CD4-positive, alpha-beta memory T cell (primary cell): ENCODE measurements at regions of chr1 and their contacts with region 1.

Region 1: GRCh38 chr1:41891199-41891896 is 27.4 kb downstream of the HIVEP3 start:
- DNase-seq: peak; percentile 75 to 80 (median 77)
- H3K4me3 ChIP-seq: peak overlapping the region; percentile 48 to 73
- H3K4me3 Mint-ChIP-seq: peak overlapping the region; percentile 81 to 95 (median 87)
- H3K27ac ChIP-seq: peak overlapping the region; percentile 74
- H3K27ac Mint-ChIP-seq: peak overlapping the region; percentile 87 to 97 (median 95)
- H3K4me1 ChIP-seq: peaks cover 52% of the 10 kb centered on the region
- H3K4me1 Mint-ChIP-seq: peaks cover 37 to 66% (median 50%) of the 10 kb centered on the region in 4 donors
- H3K27me3 ChIP-seq: no peaks in the 10 kb centered on the region
- H3K27me3 Mint-ChIP-seq: peaks cover 0 to 2% of the 10 kb centered on the region in 2 donors

Region 2: GRCh38 chr1:41662061-41662764 is 229.1 kb before region 1 on chr1:
- CTCF ChIA-PET with region 1: interaction called, 3 read pairs
- POLR2A ChIA-PET with region 1: interaction called, 3 read pairs
- intact Hi-C with region 1: loop called (anchors 10 kb)
- DNase-seq: peak; percentile 68 to 81 (median 76)
- H3K4me3 ChIP-seq: peak overlapping the region in 1 of 2 donors; percentile 64
- H3K4me3 Mint-ChIP-seq: peak overlapping the region in 3 of 8 donors; percentile 68 to 93 (median 79)
- H3K27ac ChIP-seq: peak overlapping the region; percentile 67
- H3K27ac Mint-ChIP-seq: peak overlapping the region in 6 of 7 donors; percentile 48 to 84 (median 55)
- H3K4me1 ChIP-seq: peaks cover 82% of the 10 kb centered on the region
- H3K4me1 Mint-ChIP-seq: peaks cover 58 to 89% (median 75%) of the 10 kb centered on the region in 4 donors
- H3K27me3 ChIP-seq: no peaks in the 10 kb centered on the region
- H3K27me3 Mint-ChIP-seq: no peaks in the 10 kb centered on the region

Region 3: GRCh38 chr1:41751804-41752513 is 139.4 kb before region 1 on chr1:
- CTCF ChIA-PET with region 1: no interaction called
- POLR2A ChIA-PET with region 1: interaction called, 4 read pairs
- intact Hi-C with region 1: loop called (anchors 5 kb)
- DNase-seq: no peak
- H3K4me3 ChIP-seq: no peak overlapping the region
- H3K4me3 Mint-ChIP-seq: peak overlapping the region in 4 of 8 donors; percentile 73 to 77 (median 75)
- H3K27ac ChIP-seq: no peak overlapping the region
- H3K27ac Mint-ChIP-seq: peak overlapping the region in 5 of 7 donors; percentile 72 to 92 (median 84)
- H3K4me1 ChIP-seq: peaks cover 44% of the 10 kb centered on the region
- H3K4me1 Mint-ChIP-seq: peaks cover 27 to 54% (median 40%) of the 10 kb centered on the region in 4 donors
- H3K27me3 ChIP-seq: no peaks in the 10 kb centered on the region
- H3K27me3 Mint-ChIP-seq: peaks cover 0 to 1% of the 10 kb centered on the region in 2 donors

Region 4: DNA sequence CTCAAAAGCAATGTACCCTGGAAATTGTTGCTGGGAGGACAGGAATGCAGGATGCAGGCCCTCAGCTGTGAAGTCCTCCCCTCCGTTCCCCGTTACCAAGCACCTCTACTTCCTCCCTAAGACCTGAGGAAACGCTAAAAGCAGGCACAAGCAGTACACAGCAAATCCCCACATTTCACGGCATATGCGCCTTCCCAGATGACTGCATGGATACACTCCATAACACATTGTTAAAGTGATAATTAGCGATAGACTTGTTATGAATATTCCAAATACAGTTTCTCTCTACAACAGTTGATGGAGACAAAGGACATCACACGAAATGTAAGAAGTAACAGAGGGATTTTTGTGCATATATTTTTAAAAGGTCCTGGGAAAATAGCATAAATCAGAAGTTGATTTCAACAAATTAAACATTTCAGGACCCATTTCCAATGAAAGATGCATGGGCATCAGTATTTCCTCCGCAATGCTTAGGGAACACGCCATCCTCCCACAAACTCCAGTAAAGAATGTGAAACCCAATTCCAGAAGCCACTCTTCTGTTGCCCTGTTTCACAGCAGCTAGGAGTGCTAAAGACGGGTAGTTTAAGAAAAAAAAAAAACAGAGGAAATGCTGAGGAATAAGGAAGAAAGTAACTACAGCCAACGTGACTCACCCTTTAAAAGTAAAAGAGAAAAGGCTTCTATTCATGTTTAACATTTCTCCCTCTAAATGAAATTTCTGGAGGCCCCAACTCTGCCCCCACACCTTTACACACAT is 48.2 kb before region 1 on chr1:
- CTCF ChIA-PET with region 1: no interaction called
- POLR2A ChIA-PET with region 1: no interaction called
- intact Hi-C with region 1: no loop called
- DNase-seq: no peak
- H3K4me3 ChIP-seq: no peak overlapping the region
- H3K4me3 Mint-ChIP-seq: no peak overlapping the region
- H3K27ac ChIP-seq: no peak overlapping the region
- H3K27ac Mint-ChIP-seq: peak overlapping the region in 1 of 7 donors; percentile 15
- H3K4me1 ChIP-seq: no peaks in the 10 kb centered on the region
- H3K4me1 Mint-ChIP-seq: peaks cover 10 to 23% (median 14%) of the 10 kb centered on the region in 4 donors
- H3K27me3 ChIP-seq: no peaks in the 10 kb centered on the region
- H3K27me3 Mint-ChIP-seq: no peaks in the 10 kb centered on the region

Region 5: DNA sequence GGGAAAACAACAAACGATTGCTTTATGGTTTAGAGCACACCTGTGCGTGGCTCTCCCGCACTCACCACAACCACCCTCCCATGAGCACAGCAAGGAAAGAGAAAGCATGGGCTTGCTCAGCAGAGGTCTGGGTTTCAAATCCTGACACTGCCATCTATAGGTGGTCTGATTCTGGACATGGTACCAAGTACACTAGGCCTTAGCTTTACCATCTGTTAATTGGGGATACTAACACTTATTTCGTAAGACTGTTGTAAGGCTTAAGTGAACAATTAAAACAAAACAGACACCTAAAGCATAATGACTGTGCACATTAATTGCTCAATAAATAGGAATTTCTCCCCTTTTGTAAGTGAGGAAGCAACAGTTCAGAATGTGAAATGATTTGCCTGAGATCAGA is 22.7 kb before region 1 on chr1:
- CTCF ChIA-PET with region 1: interaction called, 11 read pairs
- POLR2A ChIA-PET with region 1: no interaction called
- intact Hi-C with region 1: no loop called
- DNase-seq: peak in 3 of 5 donors; percentile 12 to 31 (median 13)
- H3K4me3 ChIP-seq: no peak overlapping the region
- H3K4me3 Mint-ChIP-seq: peak overlapping the region in 1 of 8 donors; percentile 22
- H3K27ac ChIP-seq: no peak overlapping the region
- H3K27ac Mint-ChIP-seq: peak overlapping the region in 3 of 7 donors; percentile 48 to 65 (median 50)
- H3K4me1 ChIP-seq: peaks cover 8% of the 10 kb centered on the region
- H3K4me1 Mint-ChIP-seq: peaks cover 10 to 17% (median 16%) of the 10 kb centered on the region in 4 donors
- H3K27me3 ChIP-seq: no peaks in the 10 kb centered on the region
- H3K27me3 Mint-ChIP-seq: no peaks in the 10 kb centered on the region

Region 6: GRCh38 chr1:42035830-42036604 is 144.7 kb after region 1 on chr1:
- CTCF ChIA-PET with region 1: interaction called, 8 read pairs
- POLR2A ChIA-PET with region 1: interaction called, 15 read pairs
- intact Hi-C with region 1: loop called (anchors 2 kb)
- DNase-seq: peak; percentile 95 to 98 (median 96)
- H3K4me3 ChIP-seq: peak overlapping the region; percentile 67 to 71
- H3K4me3 Mint-ChIP-seq: peak overlapping the region; percentile 80 to 85 (median 84)
- H3K27ac ChIP-seq: peak overlapping the region; percentile 40
- H3K27ac Mint-ChIP-seq: peak overlapping the region in 5 of 7 donors; percentile 31 to 85 (median 72)
- H3K4me1 ChIP-seq: peaks cover 39% of the 10 kb centered on the region
- H3K4me1 Mint-ChIP-seq: peaks cover 28 to 47% (median 35%) of the 10 kb centered on the region in 4 donors
- H3K27me3 ChIP-seq: no peaks in the 10 kb centered on the region
- H3K27me3 Mint-ChIP-seq: no peaks in the 10 kb centered on the region